Sigmoid colon (tissue), 7 donors: ENCODE measurements at regions of chrX and their contacts with region 1.

Region 1: GRCh38 chrX:15335135-15336022 is at the start of gene PIGA:
- DNase-seq: peak; percentile 98
- H3K4me3 ChIP-seq: peak within 1 kb of the TSS; percentile 70 to 78 (median 73)
- H3K27ac ChIP-seq: peak within 1 kb of the TSS; percentile 78 to 86 (median 82)
- H3K4me1 ChIP-seq: peaks cover 0 to 5% (median 0%) of the 10 kb centered on the region in 4 donors
- H3K27me3 ChIP-seq: no peaks in the 10 kb centered on the region
- CTCF ChIP-seq: no peak
- EP300 ChIP-seq: peak in 1 of 4 donors; percentile 37
- POLR2A ChIP-seq: peak; percentile 79 to 88
- total RNA-seq, gene PIGA: 3.9 to 8.0 (median 6.1) TPM

Region 2: GRCh38 chrX:14936561-14936960 is 398.8 kb before region 1 on chrX:
- intact Hi-C with region 1: no loop called
- DNase-seq: no peak
- H3K4me3 ChIP-seq: no peak overlapping the region
- H3K27ac ChIP-seq: peak overlapping the region in 1 of 4 donors; percentile 3
- H3K4me1 ChIP-seq: no peaks in the 10 kb centered on the region
- H3K27me3 ChIP-seq: no peaks in the 10 kb centered on the region
- CTCF ChIP-seq: no peak
- EP300 ChIP-seq: no peak
- POLR2A ChIP-seq: no peak

Region 3: GRCh38 chrX:15416133-15416993 is 81.0 kb after region 1 on chrX:
- intact Hi-C with region 1: no loop called
- DNase-seq: no peak
- H3K4me3 ChIP-seq: no peak overlapping the region
- H3K27ac ChIP-seq: no peak overlapping the region
- H3K4me1 ChIP-seq: no peaks in the 10 kb centered on the region
- H3K27me3 ChIP-seq: no peaks in the 10 kb centered on the region
- CTCF ChIP-seq: no peak
- EP300 ChIP-seq: no peak
- POLR2A ChIP-seq: no peak

Region 4: DNA sequence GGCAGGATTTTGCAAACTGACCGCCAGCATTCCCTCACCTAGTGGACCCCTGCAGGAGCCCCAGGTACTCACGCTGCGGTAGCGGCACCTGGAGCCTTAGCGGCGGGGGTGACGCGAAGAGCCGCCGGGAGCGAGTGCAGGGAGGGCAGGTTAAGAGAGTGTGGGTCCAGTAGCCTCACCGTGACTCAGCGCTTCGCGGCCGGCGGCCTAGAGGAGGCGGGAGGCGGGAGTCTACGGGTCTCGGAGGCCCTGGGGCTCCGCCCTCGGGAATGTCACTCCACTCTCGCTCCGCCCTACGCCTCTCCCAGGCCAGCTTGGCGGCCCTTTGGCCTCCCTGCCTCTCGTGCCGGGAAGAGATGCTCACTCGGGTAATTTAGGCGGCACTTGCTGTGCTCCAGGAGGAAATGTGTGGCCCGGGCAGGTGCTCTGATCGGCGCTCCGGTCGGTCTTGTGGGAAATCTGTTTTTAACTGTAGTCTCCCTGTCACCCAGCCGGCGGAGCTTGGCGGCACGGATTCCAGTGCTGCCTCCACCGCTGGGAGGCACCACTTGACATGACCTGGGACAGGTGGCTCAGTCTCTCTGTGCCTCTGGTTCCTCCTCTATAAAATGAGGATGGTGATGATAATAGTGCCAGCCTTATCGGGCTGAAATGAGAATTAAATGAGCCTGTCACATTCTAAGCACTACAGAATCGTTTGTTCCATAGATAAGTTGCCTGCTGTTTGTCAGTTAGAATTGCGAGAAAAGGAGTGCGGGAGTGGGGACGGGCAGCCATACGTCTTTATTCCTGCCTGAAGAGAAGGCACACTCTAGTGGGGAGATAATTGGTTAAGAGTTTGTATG is 158.0 kb after region 1 on chrX and contains the start of gene PIR:
- intact Hi-C with region 1: loop called (anchors 10 kb)
- DNase-seq: peak; percentile 92
- H3K4me3 ChIP-seq: peak within 1 kb of the TSS; percentile 34 to 57 (median 54)
- H3K27ac ChIP-seq: peak within 1 kb of the TSS; percentile 60 to 71 (median 66)
- H3K4me1 ChIP-seq: peaks cover 0 to 11% (median 3%) of the 10 kb centered on the region in 4 donors
- H3K27me3 ChIP-seq: no peaks in the 10 kb centered on the region
- CTCF ChIP-seq: peak in 2 of 4 experiments; percentile 6 to 18
- EP300 ChIP-seq: no peak
- POLR2A ChIP-seq: no peak
- total RNA-seq, gene PIR: 4.5 to 22.1 (median 15.8) TPM

Region 5: GRCh38 chrX:15737960-15738902 is 402.9 kb after region 1 on chrX and contains the start of gene CA5B:
- intact Hi-C with region 1: no loop called
- DNase-seq: peak; percentile 96
- H3K4me3 ChIP-seq: peak within 1 kb of the TSS; percentile 25 to 56 (median 46)
- H3K27ac ChIP-seq: peak within 1 kb of the TSS; percentile 34 to 40 (median 37)
- H3K4me1 ChIP-seq: peaks cover 0 to 13% (median 0%) of the 10 kb centered on the region in 4 donors
- H3K27me3 ChIP-seq: peaks cover 0 to 6% (median 0%) of the 10 kb centered on the region in 3 donors
- CTCF ChIP-seq: no peak
- EP300 ChIP-seq: no peak
- POLR2A ChIP-seq: no peak
- total RNA-seq, gene CA5B: 3.9 to 8.6 (median 7.1) TPM